ENCODE measurements at regions of chr1 and their contacts with region 1.

Region 1: DNA sequence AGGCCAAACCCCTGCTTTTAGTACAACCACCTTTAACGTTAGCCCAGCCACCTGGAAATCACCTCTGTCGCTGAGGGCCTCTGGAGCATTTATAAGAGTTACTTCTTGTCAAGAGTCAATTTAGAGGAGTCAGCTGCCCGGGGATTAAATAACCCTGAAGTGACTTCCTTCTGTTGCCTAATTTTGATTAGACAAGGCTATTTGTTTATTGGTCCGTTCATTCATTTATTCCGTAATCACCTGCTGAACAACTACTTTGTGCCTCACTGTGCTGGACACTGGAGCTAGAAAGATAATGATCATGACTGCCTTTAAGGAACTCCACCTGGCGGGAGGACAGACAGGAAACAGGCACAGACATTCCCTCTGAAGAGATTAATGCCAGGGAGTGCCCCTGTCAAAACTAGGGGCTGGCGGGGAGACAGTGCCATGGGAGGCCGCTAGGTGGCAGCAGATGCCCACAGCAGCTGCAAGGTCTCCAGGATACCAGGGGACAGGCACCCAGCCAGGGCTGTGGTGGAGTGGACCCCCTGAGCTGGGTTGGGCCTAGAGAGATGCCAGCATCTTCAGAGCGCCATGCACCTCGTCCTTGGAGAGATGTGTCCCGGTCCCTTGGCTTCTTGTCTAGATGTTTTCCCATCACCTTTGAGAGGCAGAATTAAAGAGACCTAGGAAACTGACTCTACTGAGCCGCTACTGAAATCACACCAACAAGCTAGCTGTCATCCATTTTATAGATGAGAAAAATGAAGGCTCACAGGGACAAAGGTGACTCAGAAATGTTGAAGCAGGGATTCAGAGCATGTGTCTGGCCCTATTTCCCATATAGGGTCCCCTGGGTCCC is 3.7 kb downstream of the REN start:
- DNase-seq: peak; percentile 95
- H3K27ac ChIP-seq: no peak overlapping the region
- CTCF ChIP-seq: peak; percentile 99

Region 2: DNA sequence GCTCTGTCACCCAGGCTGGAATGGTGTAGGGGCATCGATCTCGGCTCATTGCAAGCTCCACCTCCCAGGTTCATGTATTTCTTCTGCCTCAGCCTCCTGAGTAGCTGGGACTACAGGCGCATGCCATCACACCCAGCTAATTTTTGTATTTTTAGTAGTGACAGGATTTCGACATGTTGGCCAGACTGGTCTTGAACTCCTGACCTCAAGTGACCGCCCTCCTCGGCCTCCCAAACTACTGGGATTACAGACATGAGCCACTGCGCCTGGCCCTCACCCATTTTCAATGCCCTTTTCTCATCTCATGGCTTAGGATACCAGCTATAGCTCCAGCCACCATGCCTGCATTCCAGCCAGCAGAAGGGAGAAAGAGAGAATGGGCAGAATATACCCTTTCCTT is 102.5 kb before region 1 on chr1:
- CTCF ChIA-PET with region 1: no interaction called
- POLR2A ChIA-PET with region 1: no interaction called
- DNase-seq: no peak
- H3K27ac ChIP-seq: no peak overlapping the region
- CTCF ChIP-seq: no peak

Region 3: GRCh38 chr1:204072931-204073836 is 89.3 kb before region 1 on chr1 and contains the start of gene SOX13:
- CTCF ChIA-PET with region 1: interaction called, 10 read pairs
- POLR2A ChIA-PET with region 1: no interaction called
- DNase-seq: peak; percentile 97
- H3K27ac ChIP-seq: peak within 1 kb of the TSS; percentile 85
- CTCF ChIP-seq: no peak

Region 4: DNA sequence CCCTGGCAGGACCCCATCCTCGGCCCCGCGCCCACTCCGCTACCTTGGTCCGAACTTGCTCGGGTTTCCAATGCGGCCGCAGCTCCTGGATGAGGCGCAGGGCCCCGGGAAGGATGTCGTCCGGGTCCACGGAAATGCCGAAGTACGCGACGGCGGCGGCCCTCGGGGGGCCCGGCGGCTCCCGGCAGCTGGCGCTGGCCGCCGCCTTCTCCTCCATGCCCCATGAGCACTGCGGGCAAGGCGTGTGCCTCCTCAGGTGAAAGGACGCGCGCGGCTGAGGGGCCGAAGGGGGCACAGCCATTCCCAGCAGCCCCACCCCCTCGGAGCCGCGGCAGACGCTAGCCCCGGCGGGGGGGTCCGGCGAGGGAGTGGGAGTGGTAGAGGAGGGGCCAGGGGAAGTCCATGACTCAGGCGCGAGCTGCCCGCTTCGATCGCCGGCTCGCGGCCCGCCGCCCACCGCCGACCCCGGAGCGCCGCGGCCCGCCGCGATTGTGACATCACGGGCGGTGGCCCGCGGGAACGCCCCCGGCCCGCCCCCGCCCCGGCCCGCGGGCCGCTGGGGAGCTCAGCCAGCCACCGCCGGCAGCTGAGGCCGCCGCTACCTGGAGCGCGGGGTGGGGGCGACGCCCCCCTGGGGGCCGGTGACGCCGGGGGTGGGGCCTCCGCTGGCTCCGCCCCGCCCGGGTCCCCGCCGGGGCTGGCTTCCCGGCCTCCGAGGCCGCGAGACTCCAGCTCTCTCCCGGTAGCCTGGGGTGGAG is 10.7 kb before region 1 on chr1 and contains the start of gene ETNK2:
- CTCF ChIA-PET with region 1: interaction called, 25 read pairs
- POLR2A ChIA-PET with region 1: no interaction called
- DNase-seq: peak; percentile 90
- H3K27ac ChIP-seq: peak within 1 kb of the TSS; percentile 77
- CTCF ChIP-seq: no peak

Region 5: GRCh38 chr1:204198151-204198994 is 35.9 kb after region 1 on chr1:
- CTCF ChIA-PET with region 1: interaction called, 144 read pairs
- POLR2A ChIA-PET with region 1: no interaction called
- DNase-seq: peak; percentile 93
- H3K27ac ChIP-seq: no peak overlapping the region
- CTCF ChIP-seq: no peak

Region 6: GRCh38 chr1:204232526-204232925 is 70.1 kb after region 1 on chr1:
- CTCF ChIA-PET with region 1: interaction called, 13 read pairs
- POLR2A ChIA-PET with region 1: no interaction called
- DNase-seq: no peak
- H3K27ac ChIP-seq: no peak overlapping the region
- CTCF ChIP-seq: no peak

Region 7: DNA sequence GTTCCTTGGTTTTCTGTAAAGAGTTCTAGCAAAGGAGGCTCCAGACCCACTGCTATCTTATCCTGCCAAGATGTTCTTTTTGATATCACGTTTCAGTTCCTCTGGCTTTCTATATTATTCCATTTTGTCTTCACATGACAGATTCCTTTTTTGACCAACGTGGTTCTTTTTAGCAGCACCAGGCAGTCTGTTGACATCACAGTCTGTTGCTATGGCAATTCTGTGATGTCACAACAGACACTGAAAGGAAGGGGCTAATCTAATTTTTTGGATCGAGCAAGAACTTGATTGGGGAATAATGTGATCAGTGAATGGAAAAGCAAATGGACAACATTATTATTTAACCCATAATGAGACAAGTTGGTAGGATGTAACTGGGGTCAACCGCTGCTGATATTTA is 115.8 kb after region 1 on chr1:
- CTCF ChIA-PET with region 1: no interaction called
- POLR2A ChIA-PET with region 1: no interaction called
- DNase-seq: no peak
- H3K27ac ChIP-seq: no peak overlapping the region
- CTCF ChIP-seq: no peak

Region 8: DNA sequence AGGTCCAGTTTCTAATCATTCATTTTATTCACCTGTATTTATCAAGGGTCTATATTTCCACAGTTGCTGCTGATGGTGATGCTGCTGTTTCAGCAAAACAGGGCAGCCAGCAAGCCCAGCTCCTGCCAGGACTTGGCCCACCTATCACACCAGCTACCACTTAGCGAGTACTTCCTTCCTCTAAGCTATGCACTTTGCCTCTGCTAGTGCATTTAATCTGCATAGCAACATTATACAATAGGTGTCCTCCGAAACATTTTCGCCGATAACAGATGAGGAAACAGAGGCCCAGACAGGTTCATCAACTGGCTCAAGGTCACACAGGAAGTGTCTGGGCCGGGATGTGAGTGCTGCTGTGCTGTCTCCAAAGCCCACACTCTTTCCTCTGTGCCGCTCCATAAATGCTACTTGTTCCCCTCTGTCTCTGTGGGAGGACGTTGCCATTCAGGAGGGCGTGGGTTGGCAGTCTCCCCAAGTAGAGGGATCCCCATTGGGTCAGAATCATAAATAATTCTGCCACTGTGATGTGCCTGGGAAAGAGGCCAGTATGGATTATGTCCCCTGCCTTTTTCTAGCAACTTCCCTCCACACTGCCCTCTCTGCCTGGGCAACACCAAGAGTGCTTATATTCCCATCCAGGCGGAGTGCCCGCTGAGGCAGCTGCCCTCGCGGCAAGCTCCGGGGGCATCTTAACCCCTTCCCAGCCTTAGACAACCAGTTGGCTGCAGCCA is 206.7 kb after region 1 on chr1:
- CTCF ChIA-PET with region 1: interaction called, 101 read pairs
- POLR2A ChIA-PET with region 1: no interaction called
- DNase-seq: no peak
- H3K27ac ChIP-seq: no peak overlapping the region
- CTCF ChIP-seq: no peak